Natural killer cell (primary cell): ENCODE measurements at regions of chr9 and their contacts with region 1.

Region 1: GRCh38 chr9:74935008-74935407 is 17.7 kb downstream of the C9orf40 start:
- DNase-seq: no peak
- ATAC-seq: no peak
- H3K4me3 ChIP-seq: no peak overlapping the region
- H3K4me3 Mint-ChIP-seq: no peak overlapping the region
- H3K27ac ChIP-seq: no peak overlapping the region
- H3K27ac Mint-ChIP-seq: no peak overlapping the region
- H3K4me1 ChIP-seq: no peaks in the 10 kb centered on the region
- H3K4me1 Mint-ChIP-seq: no peaks in the 10 kb centered on the region
- H3K27me3 ChIP-seq: peaks cover 2% of the 10 kb centered on the region
- H3K27me3 Mint-ChIP-seq: peaks cover 7 to 17% of the 10 kb centered on the region in 2 donors
- CTCF ChIP-seq: no peak

Region 2: GRCh38 chr9:75071530-75072124 is 136.6 kb after region 1 on chr9:
- intact Hi-C with region 1: loop called (anchors 5 kb)
- DNase-seq: peak in 1 of 2 donors; percentile 68
- ATAC-seq: no peak
- H3K4me3 ChIP-seq: no peak overlapping the region
- H3K4me3 Mint-ChIP-seq: no peak overlapping the region
- H3K27ac ChIP-seq: no peak overlapping the region
- H3K27ac Mint-ChIP-seq: peak overlapping the region; percentile 3 to 71
- H3K4me1 ChIP-seq: peaks cover 5% of the 10 kb centered on the region
- H3K4me1 Mint-ChIP-seq: peaks cover 7 to 16% of the 10 kb centered on the region in 2 donors
- H3K27me3 ChIP-seq: no peaks in the 10 kb centered on the region
- H3K27me3 Mint-ChIP-seq: no peaks in the 10 kb centered on the region
- CTCF ChIP-seq: no peak